PC-3 (cell line): ENCODE measurements at regions of chr2 and their contacts with region 1.

Region 1: GRCh38 chr2:147331790-147332419 is 512.9 kb upstream of the ACVR2A start:
- DNase-seq: peak; percentile 79
- ATAC-seq: peak; percentile 67
- H3K4me3 ChIP-seq: no peak overlapping the region
- H3K27ac ChIP-seq: no peak overlapping the region
- H3K4me1 ChIP-seq: no peaks in the 10 kb centered on the region
- H3K27me3 ChIP-seq: no peaks in the 10 kb centered on the region
- CTCF ChIP-seq: peak; percentile 89

Region 2: DNA sequence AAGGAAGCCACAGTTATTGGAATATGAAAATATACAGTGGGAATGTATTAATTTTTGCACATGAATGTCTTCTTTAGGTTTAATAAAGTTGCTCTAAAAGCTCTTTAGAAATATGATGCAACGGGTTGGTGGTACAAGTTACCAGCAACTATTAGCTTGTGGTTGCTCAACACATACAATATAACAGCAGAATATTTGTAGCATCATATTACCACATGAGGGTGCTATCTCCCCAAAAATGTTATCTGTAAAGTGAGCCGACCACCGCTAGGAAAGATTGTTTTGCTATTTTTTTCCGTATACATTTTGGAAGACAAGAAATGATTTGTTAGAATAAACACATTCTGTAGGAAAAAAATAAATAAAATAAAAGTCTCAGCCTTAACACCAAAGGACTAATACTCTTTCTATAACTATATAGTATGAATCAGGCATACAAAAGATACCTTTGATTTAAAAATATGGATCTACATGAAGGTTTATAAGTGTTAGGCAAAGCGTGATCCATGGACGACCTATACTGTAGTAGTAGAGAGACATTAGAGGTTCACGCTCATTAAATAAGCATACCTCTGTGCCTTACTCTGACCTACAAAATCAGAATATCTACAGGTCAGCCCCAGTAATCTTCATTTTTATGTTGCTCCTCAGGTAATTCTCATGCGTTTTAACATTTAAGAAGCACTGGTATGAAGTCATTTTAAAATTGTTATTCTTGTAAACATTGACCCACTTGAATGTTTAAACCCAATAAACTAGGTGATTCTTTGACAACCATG is 597.7 kb before region 1 on chr2:
- CTCF ChIA-PET with region 1: interaction called, 4 read pairs
- POLR2A ChIA-PET with region 1: no interaction called
- intact Hi-C with region 1: loop called (anchors 1 kb)
- DNase-seq: peak; percentile 84
- ATAC-seq: peak; percentile 87
- H3K4me3 ChIP-seq: peak overlapping the region; percentile 22; the same call in 1 of the 2 replicates
- H3K27ac ChIP-seq: no peak overlapping the region
- H3K4me1 ChIP-seq: peaks cover 4% of the 10 kb centered on the region; the same call in 1 of the 2 replicates
- H3K27me3 ChIP-seq: no peaks in the 10 kb centered on the region
- CTCF ChIP-seq: peak; percentile 86

Region 3: DNA sequence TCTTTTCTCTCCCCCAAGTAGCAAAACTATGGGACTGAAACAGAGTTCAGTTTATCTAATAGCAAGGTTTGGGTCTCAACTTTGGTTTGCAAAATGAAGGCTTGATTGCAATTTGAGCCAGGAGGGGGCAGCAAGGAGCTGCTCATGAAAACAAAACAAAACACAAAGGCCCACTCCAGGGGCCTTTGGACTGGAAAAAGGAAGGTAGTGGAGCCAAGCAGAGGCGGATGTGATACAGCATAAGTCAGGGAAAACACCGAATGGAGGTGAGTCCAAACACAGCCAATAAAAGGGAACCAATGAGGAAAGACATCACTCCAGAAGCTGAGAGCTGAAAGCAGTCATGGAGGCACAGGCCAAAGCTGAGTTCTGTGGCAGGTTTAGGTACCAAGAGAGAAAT is 286.8 kb before region 1 on chr2:
- CTCF ChIA-PET with region 1: interaction called, 5 read pairs
- POLR2A ChIA-PET with region 1: no interaction called
- intact Hi-C with region 1: loop called (anchors 1 kb)
- DNase-seq: peak; percentile 79
- ATAC-seq: peak; percentile 68
- H3K4me3 ChIP-seq: no peak overlapping the region
- H3K27ac ChIP-seq: no peak overlapping the region
- H3K4me1 ChIP-seq: peaks cover 5% of the 10 kb centered on the region
- H3K27me3 ChIP-seq: no peaks in the 10 kb centered on the region
- CTCF ChIP-seq: peak; percentile 89

Region 4: GRCh38 chr2:147082850-147083522 is 248.9 kb before region 1 on chr2:
- CTCF ChIA-PET with region 1: interaction called, 10 read pairs
- POLR2A ChIA-PET with region 1: no interaction called
- intact Hi-C with region 1: loop called (anchors 1 kb)
- DNase-seq: peak; percentile 87
- ATAC-seq: peak; percentile 67
- H3K4me3 ChIP-seq: no peak overlapping the region
- H3K27ac ChIP-seq: no peak overlapping the region
- H3K4me1 ChIP-seq: no peaks in the 10 kb centered on the region
- H3K27me3 ChIP-seq: no peaks in the 10 kb centered on the region
- CTCF ChIP-seq: peak; percentile 96

Region 5: GRCh38 chr2:147177071-147177850 is 154.6 kb before region 1 on chr2:
- CTCF ChIA-PET with region 1: interaction called, 4 read pairs
- POLR2A ChIA-PET with region 1: no interaction called
- intact Hi-C with region 1: loop called (anchors 1 kb)
- DNase-seq: peak; percentile 75
- ATAC-seq: peak; percentile 65
- H3K4me3 ChIP-seq: no peak overlapping the region
- H3K27ac ChIP-seq: peak overlapping the region; percentile 70
- H3K4me1 ChIP-seq: peaks cover 38% of the 10 kb centered on the region
- H3K27me3 ChIP-seq: no peaks in the 10 kb centered on the region
- CTCF ChIP-seq: no peak

Region 6: GRCh38 chr2:147482111-147482895 is 150.4 kb after region 1 on chr2:
- CTCF ChIA-PET with region 1: no interaction called
- POLR2A ChIA-PET with region 1: no interaction called
- intact Hi-C with region 1: no loop called
- DNase-seq: no peak
- ATAC-seq: no peak; the same call in 1 of the 2 replicates
- H3K4me3 ChIP-seq: no peak overlapping the region
- H3K27ac ChIP-seq: no peak overlapping the region
- H3K4me1 ChIP-seq: peaks cover 11% of the 10 kb centered on the region
- H3K27me3 ChIP-seq: no peaks in the 10 kb centered on the region
- CTCF ChIP-seq: no peak